Dorsolateral prefrontal cortex (tissue), 120 donors: ENCODE measurements at regions of chr7 and their contacts with region 1.

Region 1: GRCh38 chr7:100158229-100159098 is at the start of gene TRAPPC14:
- DNase-seq: peak; percentile 86 to 95 (median 94)
- H3K4me3 ChIP-seq: peak within 1 kb of the TSS; percentile 55 to 99 (median 90)
- H3K27ac ChIP-seq: peak within 1 kb of the TSS in 57 of 59 donors; percentile 47 to 96 (median 84)
- H3K27me3 ChIP-seq: peaks cover 0 to 3% (median 0%) of the 10 kb centered on the region in 45 donors
- CTCF ChIP-seq: peak in 16 of 56 donors; percentile 7 to 39 (median 29)
- total RNA-seq, gene TRAPPC14: 16.3 to 52.5 (median 30.3) TPM

Region 2: DNA sequence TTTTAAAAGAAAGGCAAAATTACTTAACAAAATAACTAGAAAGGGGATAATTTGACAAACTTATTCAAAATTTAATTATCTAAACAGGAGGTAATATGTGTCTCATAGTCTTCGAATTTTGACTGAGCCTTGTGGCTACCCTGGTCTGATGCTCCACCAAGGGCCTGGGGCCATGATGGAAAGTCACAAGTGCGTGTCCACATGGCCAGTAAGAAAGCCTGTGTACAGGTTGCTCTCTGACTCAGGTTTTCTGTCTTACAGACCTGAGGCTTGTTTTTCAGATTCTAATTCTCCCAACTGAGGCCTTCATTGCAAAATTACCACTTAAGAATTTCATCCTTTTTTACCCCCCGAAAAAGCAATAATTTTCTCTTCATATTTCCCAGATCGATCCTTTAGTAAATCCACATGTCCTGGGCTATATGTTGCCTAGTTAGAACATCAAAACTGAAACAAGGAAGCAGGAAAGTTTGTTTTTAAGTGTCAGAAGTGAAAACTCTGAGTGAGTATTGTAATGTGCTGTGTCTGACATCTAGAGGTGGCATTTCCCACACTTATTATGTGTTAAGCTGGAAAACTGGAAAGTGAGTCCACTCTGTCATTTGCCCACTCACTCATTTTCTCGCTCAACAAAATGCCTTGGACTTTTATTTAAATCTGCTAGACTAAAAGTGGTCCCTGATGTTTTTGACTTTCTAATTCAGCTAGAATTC is 320.7 kb before region 1 on chr7:
- intact Hi-C with region 1: no loop called
- DNase-seq: no peak
- H3K4me3 ChIP-seq: no peak overlapping the region
- H3K27ac ChIP-seq: no peak overlapping the region
- H3K27me3 ChIP-seq: no peaks in the 10 kb centered on the region
- CTCF ChIP-seq: peak in 7 of 56 donors; percentile 3 to 41 (median 9)

Region 3: GRCh38 chr7:99953649-99954048 is 204.8 kb before region 1 on chr7:
- intact Hi-C with region 1: no loop called
- DNase-seq: no peak
- H3K4me3 ChIP-seq: no peak overlapping the region
- H3K27ac ChIP-seq: no peak overlapping the region
- H3K27me3 ChIP-seq: peaks cover 0 to 6% (median 0%) of the 10 kb centered on the region in 45 donors
- CTCF ChIP-seq: no peak

Region 4: DNA sequence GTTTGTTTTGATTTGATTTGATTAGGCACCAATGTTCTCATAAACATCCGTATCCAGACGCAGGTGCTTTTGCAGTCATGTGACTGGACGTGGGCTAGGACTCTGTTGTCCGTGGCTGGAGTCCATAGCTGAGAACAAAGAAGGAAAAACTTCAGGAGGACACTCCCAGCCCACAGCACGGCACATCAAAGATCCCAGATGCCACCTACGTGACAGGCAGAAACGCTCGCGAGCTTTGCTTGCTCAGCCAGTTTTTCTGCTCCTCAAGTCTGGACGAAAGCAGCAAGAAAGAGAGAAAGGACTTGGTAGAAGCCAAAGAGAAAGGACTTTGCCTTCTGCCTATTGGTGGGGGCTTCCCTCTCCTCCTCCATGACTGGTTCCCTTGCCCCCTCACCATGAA is 149.9 kb before region 1 on chr7:
- intact Hi-C with region 1: no loop called
- DNase-seq: no peak
- H3K4me3 ChIP-seq: no peak overlapping the region
- H3K27ac ChIP-seq: peak overlapping the region in 7 of 59 donors; percentile 20 to 69 (median 41)
- H3K27me3 ChIP-seq: no peaks in the 10 kb centered on the region
- CTCF ChIP-seq: no peak

Region 5: DNA sequence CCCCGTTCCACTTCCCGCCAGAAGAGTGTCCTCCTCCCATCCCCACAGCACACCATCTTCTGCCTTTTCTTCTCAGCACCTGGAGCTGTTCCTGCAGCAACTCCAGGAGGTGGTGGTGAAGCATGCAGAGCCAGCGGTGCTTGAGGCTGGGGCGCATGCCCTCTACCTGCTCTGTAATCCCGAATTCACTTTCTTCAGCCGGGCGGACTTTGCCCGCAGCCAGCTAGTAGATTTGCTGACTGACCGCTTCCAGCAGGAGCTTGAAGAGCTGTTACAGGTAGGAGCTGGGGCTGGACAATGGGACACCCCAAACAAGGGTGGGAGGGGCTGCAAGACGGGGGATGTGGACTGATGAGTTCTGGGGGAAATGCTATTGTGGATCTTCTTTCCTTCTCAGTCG is 42.2 kb after region 1 on chr7:
- intact Hi-C with region 1: loop called in 1 of 2 experiments (anchors 5 kb)
- DNase-seq: no peak
- H3K4me3 ChIP-seq: no peak overlapping the region
- H3K27ac ChIP-seq: peak overlapping the region in 1 of 59 donors; percentile 2
- H3K27me3 ChIP-seq: no peaks in the 10 kb centered on the region
- CTCF ChIP-seq: no peak

Region 6: GRCh38 chr7:100812741-100813478 is 654.4 kb after region 1 on chr7:
- intact Hi-C with region 1: no loop called
- DNase-seq: no peak
- H3K4me3 ChIP-seq: no peak overlapping the region
- H3K27ac ChIP-seq: no peak overlapping the region
- H3K27me3 ChIP-seq: no peaks in the 10 kb centered on the region
- CTCF ChIP-seq: no peak